Transverse colon (tissue), 4 donors: ENCODE measurements at regions of chr1 and their contacts with region 1.

Region 1: GRCh38 chr1:85240174-85240601 is 19.3 kb downstream of the C1orf52 start:
- DNase-seq: no peak
- H3K4me3 ChIP-seq: no peak overlapping the region
- H3K27ac ChIP-seq: peak overlapping the region in 3 of 4 donors; percentile 37 to 67 (median 50)
- H3K4me1 ChIP-seq: peaks cover 0 to 25% (median 4%) of the 10 kb centered on the region in 4 donors
- H3K27me3 ChIP-seq: no peaks in the 10 kb centered on the region
- CTCF ChIP-seq: no peak
- EP300 ChIP-seq: no peak
- POLR2A ChIP-seq: no peak

Region 2: DNA sequence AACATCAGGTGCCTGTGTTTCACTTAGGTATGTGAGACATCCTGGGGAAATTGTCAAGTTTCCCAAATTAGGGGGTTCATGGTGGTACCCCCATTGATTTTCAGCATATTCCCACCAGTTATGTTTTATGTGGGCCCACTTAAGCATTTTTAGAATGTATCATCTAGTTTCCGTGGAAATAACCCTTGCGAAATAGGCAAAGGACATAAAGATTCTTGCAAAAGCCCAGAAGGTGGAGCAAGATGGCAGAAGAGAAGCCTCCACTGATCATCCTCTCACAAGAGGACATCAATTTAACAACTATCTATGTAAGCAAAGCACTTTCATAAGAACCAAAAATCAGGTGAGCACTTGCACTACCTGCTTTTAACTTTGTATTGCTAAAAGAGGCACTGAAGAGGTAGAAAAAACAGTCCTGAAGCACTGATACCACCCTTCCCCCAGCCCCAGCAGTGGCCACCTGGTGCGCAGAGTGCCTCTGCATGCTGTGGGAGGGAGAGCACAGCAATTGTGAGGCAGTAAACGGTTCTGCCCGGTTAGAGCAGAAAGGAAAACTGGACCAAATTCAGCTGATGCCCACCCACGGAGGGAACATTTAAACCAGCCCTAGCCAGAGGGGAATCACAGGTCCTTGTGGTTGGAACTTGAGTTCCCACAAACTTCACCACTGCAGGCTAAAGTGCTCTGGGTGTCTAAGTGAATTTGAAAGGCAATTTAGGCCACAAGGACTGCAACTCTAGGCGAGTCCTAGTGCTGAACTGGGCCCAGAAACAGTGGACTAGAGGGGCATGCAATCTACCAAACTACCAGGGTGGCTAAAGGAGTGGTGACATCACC is 266.5 kb before region 1 on chr1:
- in situ Hi-C with region 1: loop called in 1 of 4 experiments (anchors 25 kb)
- intact Hi-C with region 1: no loop called
- DNase-seq: no peak
- H3K4me3 ChIP-seq: no peak overlapping the region
- H3K27ac ChIP-seq: no peak overlapping the region
- H3K4me1 ChIP-seq: peaks cover 0 to 23% (median 10%) of the 10 kb centered on the region in 4 donors
- H3K27me3 ChIP-seq: no peaks in the 10 kb centered on the region
- CTCF ChIP-seq: no peak
- EP300 ChIP-seq: no peak
- POLR2A ChIP-seq: no peak

Region 3: DNA sequence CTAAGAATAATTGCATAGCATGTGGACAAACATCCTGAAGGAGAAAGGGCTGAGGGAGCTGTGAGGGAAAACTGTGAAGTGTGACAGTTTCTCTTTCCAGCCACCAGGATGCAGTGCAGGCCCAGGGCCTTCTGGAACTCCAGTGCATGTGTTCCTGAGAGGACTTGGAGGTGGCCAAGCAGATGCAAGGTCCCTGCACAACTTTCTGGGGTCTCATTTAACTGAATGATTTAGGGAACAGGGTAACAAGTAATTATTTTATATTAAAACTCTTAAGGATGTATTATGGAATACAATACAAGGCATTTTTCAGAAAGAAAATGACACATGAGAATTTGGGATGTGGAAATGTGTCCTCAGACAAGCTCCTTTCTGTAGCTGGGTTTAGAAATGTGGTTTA is 130.7 kb before region 1 on chr1:
- in situ Hi-C with region 1: loop called in 1 of 4 experiments (anchors 10 kb)
- intact Hi-C with region 1: no loop called
- DNase-seq: peak; percentile 65
- H3K4me3 ChIP-seq: no peak overlapping the region
- H3K27ac ChIP-seq: no peak overlapping the region
- H3K4me1 ChIP-seq: no peaks in the 10 kb centered on the region
- H3K27me3 ChIP-seq: no peaks in the 10 kb centered on the region
- CTCF ChIP-seq: peak; percentile 72 to 87 (median 84)
- EP300 ChIP-seq: no peak
- POLR2A ChIP-seq: no peak

Region 4: DNA sequence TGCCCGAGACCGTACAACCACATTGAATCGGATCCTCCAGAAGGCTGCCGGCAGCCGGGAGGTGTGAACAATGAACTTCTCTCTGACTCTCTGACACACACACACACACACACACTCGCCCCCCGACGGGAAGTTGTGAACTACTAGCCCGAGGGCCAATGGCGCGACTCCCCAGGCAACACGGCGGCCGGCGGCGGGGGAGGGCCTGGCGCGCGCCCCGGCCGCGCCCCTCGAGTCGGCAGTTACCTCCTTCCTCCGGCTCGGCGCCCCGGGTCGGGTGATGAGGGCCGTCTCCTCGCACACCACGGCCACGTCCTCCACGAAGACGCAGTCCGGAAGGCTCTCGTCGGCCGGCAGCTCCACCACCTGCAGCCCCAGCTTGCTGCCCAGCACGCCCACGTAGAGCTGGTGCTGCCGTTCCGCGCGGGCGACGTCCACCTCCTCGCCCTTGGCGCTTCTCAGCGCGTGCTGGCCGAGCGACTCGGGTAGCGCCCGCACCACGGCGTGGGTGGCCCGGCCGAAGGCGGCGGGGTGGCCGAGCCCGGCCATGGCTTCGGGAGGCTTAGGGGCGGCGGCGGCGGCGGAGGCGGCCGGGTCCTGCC is 224.4 kb after region 1 on chr1:
- in situ Hi-C with region 1: no loop called
- intact Hi-C with region 1: no loop called
- DNase-seq: peak; percentile 77
- H3K4me3 ChIP-seq: peak overlapping the region; percentile 64 to 72 (median 68)
- H3K27ac ChIP-seq: peak overlapping the region; percentile 82 to 94 (median 90)
- H3K4me1 ChIP-seq: peaks cover 14 to 51% (median 33%) of the 10 kb centered on the region in 4 donors
- H3K27me3 ChIP-seq: no peaks in the 10 kb centered on the region
- CTCF ChIP-seq: no peak
- EP300 ChIP-seq: no peak
- POLR2A ChIP-seq: peak; percentile 66